ENCODE measurements at regions of chr2 and their contacts with region 1.

Region 1: GRCh38 chr2:55961318-55961911 is 37.8 kb upstream of the EFEMP1 start:
- DNase-seq: peak; percentile 27 to 52
- H3K4me3 ChIP-seq: no peak overlapping the region
- H3K27ac ChIP-seq: no peak overlapping the region
- H3K4me1 ChIP-seq: peaks cover 20% of the 10 kb centered on the region
- H3K27me3 ChIP-seq: no peaks in the 10 kb centered on the region
- CTCF ChIP-seq: peak; percentile 93

Region 2: GRCh38 chr2:55771612-55772011 is 189.8 kb before region 1 on chr2:
- CTCF ChIA-PET with region 1: interaction called, 18 read pairs
- POLR2A ChIA-PET with region 1: no interaction called
- intact Hi-C with region 1: loop called (anchors 1 kb)
- DNase-seq: peak in 1 of 2 experiments; percentile 56
- H3K4me3 ChIP-seq: no peak overlapping the region
- H3K27ac ChIP-seq: no peak overlapping the region
- H3K4me1 ChIP-seq: 0 out of 2 replicates have a peak, but pooled peaks cover 5% of the 10 kb centered on the region
- H3K27me3 ChIP-seq: no peaks in the 10 kb centered on the region
- CTCF ChIP-seq: peak; percentile 95

Region 3: DNA sequence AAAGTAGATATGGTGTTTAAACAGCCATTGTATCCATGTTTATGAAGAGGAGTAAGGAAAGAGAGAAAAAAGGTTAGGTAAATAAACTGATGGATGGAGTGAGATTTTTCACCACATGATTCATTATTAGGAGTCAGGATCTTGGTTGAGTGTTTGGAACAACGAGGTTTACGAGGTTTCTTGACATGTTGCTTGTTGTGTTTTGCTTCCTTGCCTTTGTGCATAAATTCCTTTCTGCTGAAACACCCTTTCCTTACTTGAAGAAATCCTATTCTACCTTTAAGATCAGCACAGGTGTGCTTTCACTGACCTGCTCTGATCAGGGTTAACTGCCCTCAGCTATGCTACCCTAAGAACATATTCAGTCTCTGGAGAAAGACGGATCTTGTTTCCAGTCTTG is 104.5 kb before region 1 on chr2:
- CTCF ChIA-PET with region 1: no interaction called
- POLR2A ChIA-PET with region 1: no interaction called
- intact Hi-C with region 1: loop called (anchors 1 kb)
- DNase-seq: peak in 1 of 2 experiments; percentile 97
- H3K4me3 ChIP-seq: peak overlapping the region; percentile 7; the same call in 1 of the 2 replicates
- H3K27ac ChIP-seq: peak overlapping the region; percentile 71
- H3K4me1 ChIP-seq: peaks cover 46% of the 10 kb centered on the region
- H3K27me3 ChIP-seq: no peaks in the 10 kb centered on the region
- CTCF ChIP-seq: no peak

Region 4: DNA sequence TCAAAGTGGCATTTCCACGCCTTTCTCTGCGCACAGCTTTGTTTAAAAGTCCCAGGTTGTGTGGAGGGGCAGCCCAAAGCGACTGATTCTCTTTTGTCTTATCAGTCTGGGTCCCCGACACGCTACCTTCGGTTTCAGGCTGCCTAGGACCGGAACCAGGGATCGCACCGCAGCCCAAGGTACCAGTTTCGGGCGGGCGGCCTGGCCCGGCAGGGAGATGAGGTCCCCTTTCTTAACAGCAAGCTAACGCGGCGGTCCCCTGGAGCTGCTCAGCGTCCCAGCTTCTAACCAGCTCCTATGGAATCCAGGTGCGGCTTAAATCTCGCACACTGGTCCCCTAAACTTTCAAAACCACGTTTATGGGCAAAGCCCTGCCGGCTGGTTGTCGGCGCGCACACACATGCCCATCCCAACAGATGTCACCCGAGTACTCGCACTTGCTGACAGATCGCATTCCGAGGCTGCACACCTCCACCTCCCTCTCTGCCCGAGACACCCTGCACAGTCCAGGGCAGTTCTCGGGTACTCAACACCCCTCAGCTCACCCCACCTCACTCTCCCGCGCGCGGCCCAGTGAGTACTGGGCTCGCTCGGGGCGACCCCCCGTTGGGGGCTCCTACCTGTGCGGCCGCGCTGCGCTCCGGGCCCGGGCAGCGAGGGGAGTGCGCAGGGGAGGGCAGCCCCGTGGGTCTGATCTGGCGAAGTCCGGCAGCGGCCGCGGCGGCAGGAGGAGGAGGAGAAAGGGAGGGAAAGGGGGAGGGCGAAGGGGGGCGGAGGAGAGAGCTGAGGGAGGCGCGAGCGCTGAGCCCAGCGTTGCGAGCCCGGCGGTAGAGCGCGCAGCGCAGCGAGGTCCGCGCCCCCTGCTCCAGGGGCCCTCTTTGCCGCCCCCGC is 38.1 kb before region 1 on chr2 and contains the start of gene EFEMP1:
- CTCF ChIA-PET with region 1: no interaction called
- POLR2A ChIA-PET with region 1: no interaction called
- intact Hi-C with region 1: loop called (anchors 1 kb)
- DNase-seq: peak; percentile 56 to 80
- H3K4me3 ChIP-seq: peak within 1 kb of the TSS; percentile 62
- H3K27ac ChIP-seq: no peak within 1 kb of the TSS
- H3K4me1 ChIP-seq: peaks cover 6% of the 10 kb centered on the region; the same call in 1 of the 2 replicates
- H3K27me3 ChIP-seq: peaks cover 22% of the 10 kb centered on the region; the same call in 1 of the 2 replicates
- CTCF ChIP-seq: no peak
- total RNA-seq, gene EFEMP1: 61.3 and 86.3 TPM in 2 replicates

Region 5: GRCh38 chr2:56009758-56010458 is 48.5 kb after region 1 on chr2:
- CTCF ChIA-PET with region 1: no interaction called
- POLR2A ChIA-PET with region 1: interaction called, 3 read pairs
- intact Hi-C with region 1: loop called (anchors 1 kb)
- DNase-seq: peak in 1 of 2 experiments; percentile 63
- H3K4me3 ChIP-seq: no peak overlapping the region
- H3K27ac ChIP-seq: no peak overlapping the region
- H3K4me1 ChIP-seq: no peaks in the 10 kb centered on the region
- H3K27me3 ChIP-seq: no peaks in the 10 kb centered on the region
- CTCF ChIP-seq: peak; percentile 89